Pancreas (tissue), 10 donors: ENCODE measurements at regions of chr2 and their contacts with region 1.

Region 1: GRCh38 chr2:237566401-237567235 is at the start of gene PRLH:
- DNase-seq: peak in 1 of 6 donors; percentile 49
- ATAC-seq: no peak
- H3K4me3 ChIP-seq: no peak within 1 kb of the TSS
- H3K27ac ChIP-seq: no peak within 1 kb of the TSS
- H3K4me1 ChIP-seq: no peaks in the 10 kb centered on the region
- H3K27me3 ChIP-seq: no peaks in the 10 kb centered on the region
- CTCF ChIP-seq: no peak
- total RNA-seq, gene PRLH: not detected

Region 2: DNA sequence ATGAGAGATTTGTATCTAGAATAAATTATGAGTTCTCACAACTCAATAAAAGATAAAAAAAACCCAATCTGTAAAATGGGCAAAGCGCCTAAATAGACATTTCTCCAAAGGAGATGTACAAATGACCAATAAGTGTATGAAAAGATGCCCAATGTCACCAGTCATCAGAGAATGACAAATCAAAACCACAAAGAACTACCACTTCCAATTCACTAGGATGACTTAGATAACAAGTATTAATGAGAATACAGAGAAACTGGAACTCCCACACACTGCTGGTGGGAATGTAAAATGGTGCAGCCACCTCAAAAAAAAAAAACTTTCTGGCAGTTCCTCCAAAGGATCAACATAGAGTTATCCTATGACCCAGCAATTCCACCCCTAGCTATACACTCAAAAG is 135.2 kb before region 1 on chr2:
- intact Hi-C with region 1: no loop called
- DNase-seq: no peak
- ATAC-seq: no peak
- H3K4me3 ChIP-seq: no peak overlapping the region
- H3K27ac ChIP-seq: no peak overlapping the region
- H3K4me1 ChIP-seq: peaks cover 0 to 5% (median 0%) of the 10 kb centered on the region in 3 donors
- H3K27me3 ChIP-seq: no peaks in the 10 kb centered on the region
- CTCF ChIP-seq: no peak

Region 3: GRCh38 chr2:237512774-237513466 is 53.7 kb before region 1 on chr2:
- intact Hi-C with region 1: loop called in 2 of 3 experiments (anchors 5 kb)
- DNase-seq: peak; percentile 85 to 94 (median 88)
- ATAC-seq: peak; percentile 72 to 91 (median 88)
- H3K4me3 ChIP-seq: no peak overlapping the region
- H3K27ac ChIP-seq: peak overlapping the region; percentile 12 to 71 (median 47)
- H3K4me1 ChIP-seq: peaks cover 14 to 24% (median 15%) of the 10 kb centered on the region in 3 donors
- H3K27me3 ChIP-seq: no peaks in the 10 kb centered on the region
- CTCF ChIP-seq: peak; percentile 83 to 95 (median 92)